PC-9 (cell line): ENCODE measurements at regions of chr15 and their contacts with region 1.

Region 1: DNA sequence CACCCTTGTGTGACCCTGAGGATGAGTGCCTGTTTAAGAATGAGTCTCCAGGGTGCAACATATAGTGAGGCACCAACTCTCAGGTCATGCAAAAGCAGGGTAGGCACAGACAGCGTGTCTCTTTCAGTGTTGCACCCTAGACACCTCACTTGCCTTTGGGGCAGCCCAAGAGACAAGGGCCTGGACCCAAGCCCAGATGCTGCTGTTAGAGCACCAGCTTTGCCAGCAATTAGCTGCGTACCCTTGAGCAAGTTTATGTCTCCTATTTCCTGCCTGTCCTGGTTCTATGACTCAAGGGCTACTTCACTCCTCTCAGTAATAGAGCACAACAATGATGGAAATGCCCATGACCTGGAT is 122.7 kb downstream of the AQP9 start:
- DNase-seq: peak; percentile 48 to 83
- H3K4me3 ChIP-seq: 0 out of 2 replicates have a peak overlapping the region, but pooled peaks have one; percentile 27
- H3K27ac ChIP-seq: peak overlapping the region; percentile 98
- H3K4me1 ChIP-seq: peaks cover 46% of the 10 kb centered on the region
- H3K27me3 ChIP-seq: no peaks in the 10 kb centered on the region
- CTCF ChIP-seq: no peak

Region 2: DNA sequence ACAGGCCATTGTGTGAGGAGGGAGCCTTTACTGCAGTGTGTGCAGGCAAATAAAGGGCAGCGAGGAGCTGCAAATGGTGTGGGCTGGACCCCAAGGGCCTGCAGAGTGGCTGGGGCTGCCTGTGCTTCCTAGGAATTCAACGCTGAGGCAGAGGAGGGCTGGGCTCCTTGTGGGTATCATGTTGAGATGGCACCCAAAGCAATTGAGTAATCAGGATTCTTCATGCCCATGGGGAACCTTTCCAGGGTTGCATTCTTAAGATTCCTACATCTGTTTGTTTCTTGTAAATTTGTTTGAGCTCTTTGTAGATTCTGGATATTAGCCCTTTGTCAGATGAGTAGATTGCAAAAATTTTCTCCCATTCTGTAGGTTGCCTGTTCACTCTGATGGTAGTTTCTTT is 85.5 kb after region 1 on chr15:
- CTCF ChIA-PET with region 1: no interaction called
- POLR2A ChIA-PET with region 1: no interaction called
- intact Hi-C with region 1: loop called (anchors 1 kb)
- DNase-seq: peak; percentile 84 to 91
- H3K4me3 ChIP-seq: no peak overlapping the region
- H3K27ac ChIP-seq: peak overlapping the region; percentile 51
- H3K4me1 ChIP-seq: peaks cover 23% of the 10 kb centered on the region
- H3K27me3 ChIP-seq: no peaks in the 10 kb centered on the region
- CTCF ChIP-seq: no peak